ENCODE measurements at regions of chr2 and their contacts with region 1.

Region 1: DNA sequence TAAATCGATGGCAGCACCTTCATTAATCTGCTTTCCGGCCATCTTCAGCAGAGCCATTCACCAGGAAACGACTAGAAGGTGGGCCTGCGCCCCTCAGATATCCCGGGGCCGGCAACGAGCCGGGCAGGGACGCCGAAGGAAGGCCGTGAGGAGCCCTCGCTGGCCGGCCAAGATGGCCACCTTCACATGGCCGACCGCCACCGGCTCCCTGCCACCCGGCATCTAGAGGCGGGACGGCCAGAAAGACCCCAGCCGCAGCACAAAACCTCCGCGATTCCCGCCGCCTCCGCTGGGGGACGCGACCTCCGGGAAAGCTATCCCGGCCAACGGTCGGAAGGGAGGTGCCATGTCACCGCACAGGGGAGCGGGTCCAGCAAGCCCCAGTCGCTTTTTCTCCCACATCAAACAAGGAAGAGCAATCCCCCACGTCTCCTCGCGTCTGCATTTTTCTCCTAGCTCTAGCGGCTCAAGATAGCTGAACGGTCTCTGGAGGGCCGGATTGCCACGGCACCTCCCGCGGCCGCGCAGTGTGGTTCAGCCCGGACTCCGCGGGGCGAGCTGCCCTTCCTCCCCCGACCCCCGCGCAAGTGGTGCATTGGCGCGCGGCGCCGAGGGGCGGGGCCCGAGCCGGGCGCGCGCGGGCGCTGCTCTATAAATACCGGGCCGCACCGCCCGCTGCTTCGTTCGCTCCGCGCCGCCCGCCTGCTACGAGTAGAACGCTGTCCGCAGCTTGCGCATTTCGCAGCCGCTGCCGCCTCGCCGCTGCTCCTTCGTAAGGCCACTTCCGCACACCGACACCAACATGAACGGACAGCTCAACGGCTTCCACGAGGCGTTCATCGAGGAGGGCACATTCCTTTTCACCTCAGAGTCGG is at the start of gene MAT2A:
- DNase-seq: peak; percentile 91
- ATAC-seq: peak; percentile 86
- H3K4me3 Mint-ChIP-seq: peak within 1 kb of the TSS; percentile 99
- H3K27ac Mint-ChIP-seq: peak within 1 kb of the TSS; percentile 99
- H3K4me1 Mint-ChIP-seq: peaks cover 41% of the 10 kb centered on the region
- H3K27me3 Mint-ChIP-seq: no peaks in the 10 kb centered on the region
- CTCF ChIP-seq: peak; percentile 65
- total RNA-seq, gene MAT2A: 276 to 282 TPM

Region 2: GRCh38 chr2:85354286-85355072 is 184.2 kb before region 1 on chr2 and contains the starts of genes ELMOD3 and RETSAT:
- CTCF ChIA-PET with region 1: no interaction called
- POLR2A ChIA-PET with region 1: interaction called, 23 read pairs
- intact Hi-C with region 1: no loop called
- DNase-seq: peak; percentile 99
- ATAC-seq: peak; percentile 99
- H3K4me3 Mint-ChIP-seq: peak within 1 kb of the TSS; percentile 95
- H3K27ac Mint-ChIP-seq: peak within 1 kb of the TSS; percentile 94
- H3K4me1 Mint-ChIP-seq: peaks cover 38% of the 10 kb centered on the region
- H3K27me3 Mint-ChIP-seq: no peaks in the 10 kb centered on the region
- CTCF ChIP-seq: no peak
- total RNA-seq, gene ELMOD3: 11.8 to 13.0 TPM
- total RNA-seq, gene RETSAT: 21.3 to 22.9 TPM

Region 3: GRCh38 chr2:85437488-85438284 is 101.0 kb before region 1 on chr2:
- CTCF ChIA-PET with region 1: interaction called, 3 read pairs
- POLR2A ChIA-PET with region 1: interaction called, 382 read pairs
- intact Hi-C with region 1: no loop called
- DNase-seq: peak; percentile 83
- ATAC-seq: peak; percentile 79
- H3K4me3 Mint-ChIP-seq: peak overlapping the region; percentile 78
- H3K27ac Mint-ChIP-seq: peak overlapping the region; percentile 93
- H3K4me1 Mint-ChIP-seq: peaks cover 30% of the 10 kb centered on the region
- H3K27me3 Mint-ChIP-seq: no peaks in the 10 kb centered on the region
- CTCF ChIP-seq: no peak

Region 4: GRCh38 chr2:85561317-85561979 is 22.7 kb after region 1 on chr2 and contains the start of gene GGCX:
- CTCF ChIA-PET with region 1: interaction called, 4 read pairs
- POLR2A ChIA-PET with region 1: interaction called, 467 read pairs
- intact Hi-C with region 1: no loop called
- DNase-seq: peak; percentile 98
- ATAC-seq: peak; percentile 95
- H3K4me3 Mint-ChIP-seq: peak within 1 kb of the TSS; percentile 100
- H3K27ac Mint-ChIP-seq: peak within 1 kb of the TSS; percentile 100
- H3K4me1 Mint-ChIP-seq: peaks cover 32% of the 10 kb centered on the region
- H3K27me3 Mint-ChIP-seq: no peaks in the 10 kb centered on the region
- CTCF ChIP-seq: no peak
- total RNA-seq, gene GGCX: 14.6 to 16.7 TPM

Region 5: GRCh38 chr2:85584857-85585783 is 46.4 kb after region 1 on chr2:
- CTCF ChIA-PET with region 1: no interaction called
- POLR2A ChIA-PET with region 1: interaction called, 21 read pairs
- intact Hi-C with region 1: no loop called
- DNase-seq: peak; percentile 33
- ATAC-seq: peak; percentile 70
- H3K4me3 Mint-ChIP-seq: peak overlapping the region; percentile 81
- H3K27ac Mint-ChIP-seq: peak overlapping the region; percentile 91
- H3K4me1 Mint-ChIP-seq: peaks cover 40% of the 10 kb centered on the region
- H3K27me3 Mint-ChIP-seq: no peaks in the 10 kb centered on the region
- CTCF ChIP-seq: no peak